Activated naive CD4-positive, alpha-beta T cell treated with anti-CD3 and anti-CD28 coated beads for 36 hours (primary cell): ENCODE measurements at regions of chr12 and their contacts with region 1.

Region 1: GRCh38 chr12:106919910-106920544 is 35.7 kb upstream of the TMEM263 start:
- DNase-seq: peak; percentile 23
- H3K4me3 Mint-ChIP-seq: no peak overlapping the region
- H3K27ac Mint-ChIP-seq: no peak overlapping the region
- H3K4me1 Mint-ChIP-seq: peaks cover 8% of the 10 kb centered on the region
- H3K27me3 Mint-ChIP-seq: peaks cover 5% of the 10 kb centered on the region

Region 2: DNA sequence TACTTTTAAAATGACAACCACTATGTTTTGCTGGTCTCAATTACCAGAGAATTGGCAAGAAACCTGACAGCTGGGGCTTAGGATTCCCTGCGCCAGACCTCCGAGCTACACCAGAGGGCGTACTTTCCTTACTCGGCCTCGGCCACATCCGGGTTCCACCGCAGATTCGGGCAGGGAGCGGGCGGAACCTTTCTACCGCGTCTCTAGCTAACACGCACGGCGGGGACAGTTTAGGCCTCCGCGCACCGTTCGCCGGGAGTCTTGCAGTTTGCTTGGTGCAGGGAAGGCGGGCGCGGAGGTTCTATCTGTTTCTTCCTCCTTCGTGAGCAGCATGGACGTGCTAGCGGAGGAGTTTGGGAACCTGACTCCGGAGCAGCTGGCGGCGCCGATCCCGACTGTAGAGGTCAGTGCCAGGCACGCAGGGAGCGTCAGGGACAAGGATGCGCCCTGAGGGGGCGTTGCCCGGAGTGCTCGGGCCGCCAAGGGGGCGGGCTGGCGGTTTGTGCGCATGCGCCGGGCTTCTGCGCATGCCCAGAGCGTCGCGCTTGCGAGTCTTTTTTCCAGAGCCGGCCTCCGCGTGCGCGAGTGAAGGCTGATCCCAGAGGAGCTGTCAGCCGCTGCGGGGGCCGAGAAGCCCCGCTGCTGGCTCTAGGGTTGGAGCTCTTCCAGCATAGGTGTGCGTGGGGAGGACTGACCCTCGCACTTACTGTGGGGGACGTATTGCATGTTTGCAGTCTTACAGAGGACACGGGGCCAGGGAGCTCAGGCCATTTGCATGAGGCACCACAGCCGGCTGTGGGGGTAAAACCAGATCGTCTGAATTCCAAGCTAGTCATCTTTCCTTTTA is 562.3 kb before region 1 on chr12 and contains the start of gene POLR3B:
- CTCF ChIA-PET with region 1: interaction called, 3 read pairs
- intact Hi-C with region 1: loop called (anchors 1 kb)
- DNase-seq: peak; percentile 97
- H3K4me3 Mint-ChIP-seq: peak within 1 kb of the TSS; percentile 92
- H3K27ac Mint-ChIP-seq: peak within 1 kb of the TSS; percentile 89
- H3K4me1 Mint-ChIP-seq: peaks cover 11% of the 10 kb centered on the region
- H3K27me3 Mint-ChIP-seq: no peaks in the 10 kb centered on the region
- total RNA-seq, gene POLR3B: 6.4 to 6.8 TPM

Region 3: GRCh38 chr12:106581543-106582248 is 338.3 kb before region 1 on chr12:
- CTCF ChIA-PET with region 1: no interaction called
- intact Hi-C with region 1: loop called (anchors 10 kb)
- DNase-seq: no peak
- H3K4me3 Mint-ChIP-seq: peak overlapping the region; percentile 39
- H3K27ac Mint-ChIP-seq: no peak overlapping the region
- H3K4me1 Mint-ChIP-seq: peaks cover 34% of the 10 kb centered on the region
- H3K27me3 Mint-ChIP-seq: peaks cover 73% of the 10 kb centered on the region

Region 4: DNA sequence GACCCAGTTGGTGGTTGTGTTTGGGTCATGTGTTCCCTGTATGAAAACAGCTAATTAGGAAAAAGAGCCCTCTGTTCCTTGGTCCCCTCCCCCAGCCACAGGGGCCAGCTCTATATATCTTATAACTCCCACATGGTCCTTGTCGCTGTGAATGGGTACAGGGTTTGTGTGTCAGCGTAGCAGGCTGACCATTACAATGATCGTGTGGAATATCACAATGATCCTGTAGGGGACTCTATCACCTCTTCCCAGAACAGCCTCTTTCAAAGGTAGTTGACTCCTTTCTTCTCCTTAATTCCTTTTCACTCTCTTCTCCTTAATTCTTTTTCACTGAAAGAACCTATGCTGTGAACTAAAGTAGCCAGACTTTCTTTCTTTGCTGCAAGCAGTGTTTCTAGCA is 197.2 kb before region 1 on chr12:
- CTCF ChIA-PET with region 1: no interaction called
- intact Hi-C with region 1: loop called (anchors 5 kb)
- DNase-seq: no peak
- H3K4me3 Mint-ChIP-seq: no peak overlapping the region
- H3K27ac Mint-ChIP-seq: no peak overlapping the region
- H3K4me1 Mint-ChIP-seq: peaks cover 2% of the 10 kb centered on the region
- H3K27me3 Mint-ChIP-seq: no peaks in the 10 kb centered on the region

Region 5: GRCh38 chr12:106841510-106842302 is 78.3 kb before region 1 on chr12:
- CTCF ChIA-PET with region 1: interaction called, 5 read pairs
- intact Hi-C with region 1: loop called (anchors 2 kb)
- DNase-seq: peak; percentile 67
- H3K4me3 Mint-ChIP-seq: no peak overlapping the region
- H3K27ac Mint-ChIP-seq: no peak overlapping the region
- H3K4me1 Mint-ChIP-seq: peaks cover 7% of the 10 kb centered on the region
- H3K27me3 Mint-ChIP-seq: no peaks in the 10 kb centered on the region